HEK293T (cell line): ENCODE measurements at regions of chr1 and their contacts with region 1.

Region 1: GRCh38 chr1:20696397-20697329 is 21.1 kb downstream of the KIF17 start:
- DNase-seq: peak; percentile 87

Region 2: GRCh38 chr1:20717452-20718342 is 21.0 kb after region 1 on chr1 and contains the start of gene KIF17:
- CTCF ChIA-PET with region 1: interaction called, 11 read pairs
- POLR2A ChIA-PET with region 1: no interaction called
- DNase-seq: peak; percentile 81

Region 3: DNA sequence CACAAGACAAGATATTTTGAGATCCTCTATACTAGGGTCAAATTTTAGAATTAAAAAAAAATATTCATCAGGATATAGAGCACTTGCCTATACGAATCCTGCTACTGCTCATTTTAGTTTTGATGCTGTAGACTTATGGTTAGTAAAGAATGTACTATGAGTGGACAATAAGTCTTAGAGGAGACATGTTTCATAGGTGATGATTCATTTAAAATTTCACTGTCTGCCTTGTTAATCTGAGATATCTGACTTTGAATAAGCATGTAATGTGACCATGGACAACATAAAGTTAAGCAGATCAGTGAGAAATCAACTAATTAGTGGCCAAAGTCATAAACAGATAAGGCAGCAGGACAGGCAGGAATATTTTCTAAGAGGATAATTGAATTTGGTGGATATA is 197.3 kb after region 1 on chr1:
- CTCF ChIA-PET with region 1: no interaction called
- POLR2A ChIA-PET with region 1: no interaction called
- DNase-seq: no peak

Region 4: DNA sequence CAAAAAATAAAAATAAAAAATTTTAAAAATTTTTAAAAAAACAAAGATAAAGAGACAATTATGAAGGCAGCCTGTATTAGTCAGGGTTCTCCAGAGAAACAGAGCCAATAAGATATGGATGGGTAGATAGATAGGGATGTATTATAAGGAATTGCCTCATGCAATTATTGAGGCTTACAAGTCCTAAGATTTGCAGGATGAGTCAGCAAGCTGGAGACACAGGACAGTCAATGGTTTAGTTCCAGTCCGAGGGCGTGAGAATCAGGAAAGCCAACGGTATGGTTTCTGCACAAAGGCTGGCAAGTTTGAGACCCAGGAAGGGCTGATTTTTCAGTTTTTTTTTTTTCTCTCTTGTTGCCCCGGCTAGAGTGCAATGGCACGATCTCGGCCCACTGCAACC is 504.1 kb after region 1 on chr1:
- CTCF ChIA-PET with region 1: interaction called, 18 read pairs
- POLR2A ChIA-PET with region 1: no interaction called
- DNase-seq: no peak